CD4-positive, alpha-beta T cell (primary cell): ENCODE measurements at regions of chr12 and their contacts with region 1.

Region 1: GRCh38 chr12:49842519-49843352 is at the start of gene BCDIN3D:
- DNase-seq: peak; percentile 86 to 97 (median 90)
- ATAC-seq: peak; percentile 90
- H3K4me3 ChIP-seq: peak within 1 kb of the TSS; percentile 83
- H3K4me3 Mint-ChIP-seq: peak within 1 kb of the TSS; percentile 90
- H3K27ac ChIP-seq: peak within 1 kb of the TSS; percentile 80 to 85
- H3K27ac Mint-ChIP-seq: peak within 1 kb of the TSS; percentile 88
- H3K4me1 ChIP-seq: peaks cover 34% of the 10 kb centered on the region
- H3K4me1 Mint-ChIP-seq: peaks cover 43% of the 10 kb centered on the region
- H3K27me3 ChIP-seq: no peaks in the 10 kb centered on the region
- H3K27me3 Mint-ChIP-seq: no peaks in the 10 kb centered on the region
- CTCF ChIP-seq: no peak
- total RNA-seq, gene BCDIN3D: 2.8 to 3.9 TPM

Region 2: DNA sequence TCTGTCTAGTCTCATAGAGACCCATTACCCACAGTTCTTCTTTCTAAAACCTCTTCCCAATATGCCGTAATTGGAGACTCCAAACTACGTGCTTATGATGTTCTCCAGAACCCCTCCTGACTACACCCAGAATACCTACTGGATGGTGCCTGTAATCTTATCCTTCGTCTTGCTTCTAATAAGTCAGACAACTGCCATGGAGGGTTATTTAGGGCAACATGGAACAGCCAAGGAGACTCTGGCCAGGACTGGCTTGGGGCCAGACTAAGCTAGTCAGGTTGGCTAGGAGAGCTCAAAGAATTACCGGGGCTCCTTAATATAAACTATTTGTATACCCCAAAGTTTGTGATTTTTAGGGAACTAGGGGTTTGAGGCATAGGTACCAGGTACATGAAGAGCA is 1716.8 kb before region 1 on chr12:
- CTCF ChIA-PET with region 1: no interaction called
- POLR2A ChIA-PET with region 1: no interaction called
- intact Hi-C with region 1: no loop called
- DNase-seq: no peak
- ATAC-seq: no peak
- H3K4me3 ChIP-seq: no peak overlapping the region
- H3K4me3 Mint-ChIP-seq: no peak overlapping the region
- H3K27ac ChIP-seq: no peak overlapping the region
- H3K27ac Mint-ChIP-seq: no peak overlapping the region
- H3K4me1 ChIP-seq: no peaks in the 10 kb centered on the region
- H3K4me1 Mint-ChIP-seq: peaks cover 3% of the 10 kb centered on the region
- H3K27me3 ChIP-seq: no peaks in the 10 kb centered on the region
- H3K27me3 Mint-ChIP-seq: no peaks in the 10 kb centered on the region
- CTCF ChIP-seq: no peak

Region 3: DNA sequence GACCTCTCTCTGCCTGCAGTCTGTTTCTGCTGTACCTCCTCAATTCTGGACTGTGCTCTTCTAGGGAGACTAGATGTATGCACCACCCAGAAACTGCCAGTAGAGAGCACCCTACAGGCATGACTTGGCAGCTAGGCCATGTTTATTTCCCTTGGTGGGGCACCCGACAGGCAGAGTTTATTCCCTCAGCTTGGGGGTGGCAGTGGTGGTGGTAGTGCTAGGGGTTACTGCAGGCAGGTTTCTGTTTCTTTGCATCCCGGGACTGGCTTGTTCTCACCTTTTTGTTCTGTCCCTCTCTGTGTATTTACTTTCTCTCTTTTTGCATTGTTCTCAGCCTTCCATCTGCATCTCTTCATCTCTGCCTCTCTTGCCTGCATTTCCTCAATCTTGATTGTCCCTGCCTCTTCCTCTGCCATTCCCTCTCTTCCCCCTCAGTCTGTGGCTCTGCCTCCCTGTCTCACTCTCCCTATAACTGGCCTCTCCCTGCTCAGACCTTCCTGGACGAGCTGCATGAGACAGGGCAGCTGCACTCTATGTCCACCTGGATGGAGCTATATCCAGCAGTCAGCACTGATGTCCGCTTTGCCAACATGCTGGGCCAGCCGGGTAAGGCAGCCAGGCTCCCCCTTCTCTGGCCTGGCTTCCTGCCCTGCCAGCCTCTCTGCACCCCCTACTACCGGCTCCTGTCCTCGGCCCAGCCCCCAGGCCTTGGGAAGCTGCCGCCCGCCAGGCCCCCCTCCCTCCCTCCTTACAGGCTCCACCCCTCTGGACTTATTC is 205.6 kb before region 1 on chr12:
- CTCF ChIA-PET with region 1: interaction called, 5 read pairs
- POLR2A ChIA-PET with region 1: no interaction called
- intact Hi-C with region 1: loop called in 1 of 2 experiments (anchors 5 kb)
- DNase-seq: peak; percentile 31 to 79 (median 47)
- ATAC-seq: peak; percentile 99
- H3K4me3 ChIP-seq: no peak overlapping the region
- H3K4me3 Mint-ChIP-seq: no peak overlapping the region
- H3K27ac ChIP-seq: no peak overlapping the region
- H3K27ac Mint-ChIP-seq: peak overlapping the region; percentile 2
- H3K4me1 ChIP-seq: peaks cover 19% of the 10 kb centered on the region
- H3K4me1 Mint-ChIP-seq: peaks cover 25% of the 10 kb centered on the region
- H3K27me3 ChIP-seq: no peaks in the 10 kb centered on the region
- H3K27me3 Mint-ChIP-seq: no peaks in the 10 kb centered on the region
- CTCF ChIP-seq: peak; percentile 54

Region 4: GRCh38 chr12:49644620-49644994 is 198.1 kb before region 1 on chr12:
- CTCF ChIA-PET with region 1: interaction called, 4 read pairs
- POLR2A ChIA-PET with region 1: no interaction called
- intact Hi-C with region 1: loop called (anchors 5 kb)
- DNase-seq: peak; percentile 73 to 92 (median 80)
- ATAC-seq: peak; percentile 95
- H3K4me3 ChIP-seq: no peak overlapping the region
- H3K4me3 Mint-ChIP-seq: peak overlapping the region; percentile 2
- H3K27ac ChIP-seq: peak overlapping the region; percentile 17 to 18
- H3K27ac Mint-ChIP-seq: peak overlapping the region; percentile 78
- H3K4me1 ChIP-seq: peaks cover 31% of the 10 kb centered on the region
- H3K4me1 Mint-ChIP-seq: peaks cover 36% of the 10 kb centered on the region
- H3K27me3 ChIP-seq: no peaks in the 10 kb centered on the region
- H3K27me3 Mint-ChIP-seq: no peaks in the 10 kb centered on the region
- CTCF ChIP-seq: peak; percentile 98

Region 5: GRCh38 chr12:49763006-49763591 is 79.6 kb before region 1 on chr12:
- CTCF ChIA-PET with region 1: interaction called, 14 read pairs
- POLR2A ChIA-PET with region 1: interaction called, 13 read pairs
- intact Hi-C with region 1: loop called in 1 of 2 experiments (anchors 1 kb)
- DNase-seq: peak; percentile 61 to 90 (median 76)
- ATAC-seq: peak; percentile 82
- H3K4me3 ChIP-seq: no peak overlapping the region
- H3K4me3 Mint-ChIP-seq: peak overlapping the region; percentile 1
- H3K27ac ChIP-seq: peak overlapping the region; percentile 55 to 71
- H3K27ac Mint-ChIP-seq: peak overlapping the region; percentile 73
- H3K4me1 ChIP-seq: peaks cover 63% of the 10 kb centered on the region
- H3K4me1 Mint-ChIP-seq: peaks cover 62% of the 10 kb centered on the region
- H3K27me3 ChIP-seq: no peaks in the 10 kb centered on the region
- H3K27me3 Mint-ChIP-seq: no peaks in the 10 kb centered on the region
- CTCF ChIP-seq: peak; percentile 87

Region 6: GRCh38 chr12:49776413-49776812 is 66.3 kb before region 1 on chr12:
- CTCF ChIA-PET with region 1: interaction called, 19 read pairs
- POLR2A ChIA-PET with region 1: interaction called, 9 read pairs
- intact Hi-C with region 1: loop called (anchors 1 kb)
- DNase-seq: peak in 13 of 14 experiments; percentile 14 to 77 (median 37)
- ATAC-seq: peak; percentile 73
- H3K4me3 ChIP-seq: no peak overlapping the region
- H3K4me3 Mint-ChIP-seq: no peak overlapping the region
- H3K27ac ChIP-seq: no peak overlapping the region
- H3K27ac Mint-ChIP-seq: no peak overlapping the region
- H3K4me1 ChIP-seq: peaks cover 13% of the 10 kb centered on the region
- H3K4me1 Mint-ChIP-seq: peaks cover 10% of the 10 kb centered on the region
- H3K27me3 ChIP-seq: peaks cover 0 to 3% of the 10 kb centered on the region in 2 experiments
- H3K27me3 Mint-ChIP-seq: peaks cover 25% of the 10 kb centered on the region
- CTCF ChIP-seq: peak; percentile 52

Region 7: DNA sequence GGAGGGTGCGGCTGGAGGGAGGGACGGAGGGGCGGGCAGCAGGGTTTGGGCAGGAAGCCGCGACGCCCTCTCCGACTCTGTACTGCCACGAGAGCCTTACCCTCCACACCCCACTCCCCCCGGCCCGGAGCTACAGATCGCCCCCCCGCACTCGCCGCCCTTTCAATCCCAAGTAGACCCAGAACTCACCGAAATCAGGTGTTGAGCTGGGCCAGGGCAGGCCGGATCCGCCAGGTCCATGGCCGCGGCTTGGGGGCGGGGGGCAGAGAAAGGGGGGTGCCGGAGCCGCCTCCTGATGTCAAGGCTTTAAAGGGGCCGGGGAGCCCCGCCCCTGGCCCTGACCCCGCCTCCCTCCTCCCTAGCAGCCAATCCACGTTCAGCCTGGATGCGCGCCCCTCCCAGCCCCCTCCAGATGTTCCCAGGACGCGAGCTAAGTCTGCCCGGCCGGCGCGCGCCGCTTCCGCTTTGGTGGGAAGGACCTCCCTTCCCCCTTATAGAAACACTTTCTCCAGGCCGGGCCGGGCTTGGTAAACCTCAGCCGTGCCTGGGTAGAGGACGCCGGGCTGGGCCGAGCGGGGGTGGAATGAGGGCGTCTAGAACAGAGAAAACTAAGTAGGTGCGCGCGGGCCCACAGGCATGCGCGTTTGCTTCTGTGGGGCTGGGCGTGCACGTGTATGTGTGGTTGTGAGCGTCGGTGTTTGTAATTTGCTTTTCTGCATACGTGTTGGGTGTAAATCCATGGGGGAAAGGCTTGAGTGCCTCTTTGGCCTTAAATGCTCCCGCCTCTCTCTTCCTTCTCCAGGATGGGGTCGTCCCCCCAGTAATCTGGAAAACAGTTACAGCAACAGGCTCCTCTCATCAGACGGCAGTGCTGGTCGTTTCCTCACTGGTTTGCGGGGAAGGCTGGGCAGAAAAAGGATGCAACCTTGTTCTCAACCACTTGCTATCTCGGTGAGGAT is 14.3 kb before region 1 on chr12 and contains the start of gene NCKAP5L:
- CTCF ChIA-PET with region 1: interaction called, 4 read pairs
- POLR2A ChIA-PET with region 1: interaction called, 28 read pairs
- intact Hi-C with region 1: loop called (anchors 1 kb)
- DNase-seq: peak; percentile 88 to 98 (median 92)
- ATAC-seq: peak; percentile 95
- H3K4me3 ChIP-seq: peak within 1 kb of the TSS; percentile 64
- H3K4me3 Mint-ChIP-seq: peak within 1 kb of the TSS; percentile 98
- H3K27ac ChIP-seq: peak within 1 kb of the TSS; percentile 63 to 72
- H3K27ac Mint-ChIP-seq: peak within 1 kb of the TSS; percentile 89
- H3K4me1 ChIP-seq: peaks cover 31% of the 10 kb centered on the region
- H3K4me1 Mint-ChIP-seq: peaks cover 42% of the 10 kb centered on the region
- H3K27me3 ChIP-seq: no peaks in the 10 kb centered on the region
- H3K27me3 Mint-ChIP-seq: no peaks in the 10 kb centered on the region
- CTCF ChIP-seq: no peak
- total RNA-seq, gene NCKAP5L: 9.2 to 9.8 TPM

Region 8: DNA sequence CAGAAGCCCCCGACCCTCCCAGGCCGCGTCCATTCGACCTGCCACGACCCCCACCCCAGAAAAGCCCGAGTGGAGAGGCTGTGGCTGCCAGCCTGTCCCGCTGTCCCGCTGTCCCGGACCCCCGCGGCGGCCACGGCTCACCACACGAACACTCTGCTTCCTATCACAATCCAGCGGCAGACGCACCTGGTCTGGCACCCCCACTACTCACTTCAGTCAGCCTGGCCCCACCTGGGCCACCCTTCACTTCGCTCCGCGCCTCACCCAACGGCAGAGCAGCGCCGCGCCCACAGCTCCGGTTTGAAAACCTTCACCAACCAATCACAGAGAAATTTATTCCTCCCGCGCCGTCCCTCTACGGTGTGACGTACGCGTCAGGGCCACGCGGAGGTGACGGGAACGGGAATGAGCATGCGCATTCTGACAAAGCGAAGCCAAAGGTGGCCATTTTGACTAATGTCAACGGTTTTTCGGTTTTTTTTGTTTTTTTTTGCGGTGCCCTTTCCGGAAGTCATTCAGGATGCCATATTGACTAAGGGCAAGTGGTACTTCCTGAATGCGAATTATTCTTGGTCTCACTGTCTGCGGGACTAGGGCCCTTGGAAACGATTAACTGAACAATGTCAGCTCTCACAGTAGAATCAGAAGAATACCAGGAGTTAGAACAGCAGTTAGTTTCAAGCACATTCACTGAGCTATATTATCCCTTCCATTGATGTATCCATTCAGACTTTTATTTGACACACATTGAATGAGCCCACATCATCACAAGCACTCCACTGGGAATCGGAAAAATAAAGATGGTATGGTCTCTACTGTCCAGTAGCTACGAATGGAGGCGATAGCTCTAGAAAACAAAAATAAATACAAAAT is 182.7 kb after region 1 on chr12 and contains the start of gene RACGAP1:
- CTCF ChIA-PET with region 1: no interaction called
- POLR2A ChIA-PET with region 1: no interaction called
- intact Hi-C with region 1: loop called in 1 of 2 experiments (anchors 10 kb)
- DNase-seq: peak; percentile 88 to 99 (median 94)
- ATAC-seq: peak; percentile 97
- H3K4me3 ChIP-seq: peak within 1 kb of the TSS; percentile 75
- H3K4me3 Mint-ChIP-seq: peak within 1 kb of the TSS; percentile 94
- H3K27ac ChIP-seq: peak within 1 kb of the TSS; percentile 16 to 28
- H3K27ac Mint-ChIP-seq: peak within 1 kb of the TSS; percentile 66
- H3K4me1 ChIP-seq: peaks cover 18% of the 10 kb centered on the region
- H3K4me1 Mint-ChIP-seq: peaks cover 15% of the 10 kb centered on the region
- H3K27me3 ChIP-seq: no peaks in the 10 kb centered on the region
- H3K27me3 Mint-ChIP-seq: peaks cover 13% of the 10 kb centered on the region
- CTCF ChIP-seq: no peak
- total RNA-seq, gene RACGAP1: 3.0 to 3.3 TPM